Gastrocnemius medialis (tissue), 4 donors: ENCODE measurements at regions of chr1 and their contacts with region 1.

Region 1: DNA sequence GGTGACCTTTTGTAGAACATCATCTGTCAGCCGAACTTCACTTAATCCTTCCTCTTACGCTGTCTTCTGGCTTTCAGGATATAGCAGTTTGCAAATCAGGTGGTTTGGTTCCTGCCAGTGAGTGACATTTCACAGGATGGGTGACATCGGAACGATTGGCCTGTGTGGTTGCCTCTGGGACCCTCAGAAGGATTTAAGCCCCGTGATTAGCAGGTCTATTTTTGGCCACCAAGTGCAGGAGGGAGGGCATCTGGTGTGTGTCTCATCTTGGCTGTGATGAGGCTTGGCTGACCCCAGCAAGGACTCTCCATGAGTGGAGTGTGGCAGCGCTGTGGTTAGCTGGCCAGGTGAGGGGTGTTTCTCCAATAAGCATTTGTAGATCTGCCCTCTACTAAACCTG is 407.6 kb upstream of the VAMP3 start:
- DNase-seq: peak; percentile 43 to 44
- ATAC-seq: peak; percentile 50 to 56
- H3K4me3 ChIP-seq: no peak overlapping the region
- H3K27ac ChIP-seq: peak overlapping the region; percentile 46 to 80 (median 62)
- H3K4me1 ChIP-seq: peaks cover 22 to 31% of the 10 kb centered on the region in 2 donors
- H3K27me3 ChIP-seq: no peaks in the 10 kb centered on the region
- CTCF ChIP-seq: no peak
- POLR2A ChIP-seq: no peak

Region 2: GRCh38 chr1:7290971-7291970 is 72.2 kb before region 1 on chr1:
- in situ Hi-C with region 1: no loop called
- intact Hi-C with region 1: loop called (anchors 2 kb)
- DNase-seq: peak; percentile 77 to 81
- ATAC-seq: peak; percentile 95 to 96
- H3K4me3 ChIP-seq: no peak overlapping the region
- H3K27ac ChIP-seq: peak overlapping the region; percentile 38 to 64 (median 58)
- H3K4me1 ChIP-seq: peaks cover 15 to 16% of the 10 kb centered on the region in 2 donors
- H3K27me3 ChIP-seq: no peaks in the 10 kb centered on the region
- CTCF ChIP-seq: no peak
- POLR2A ChIP-seq: peak in 1 of 2 donors; percentile 9

Region 3: DNA sequence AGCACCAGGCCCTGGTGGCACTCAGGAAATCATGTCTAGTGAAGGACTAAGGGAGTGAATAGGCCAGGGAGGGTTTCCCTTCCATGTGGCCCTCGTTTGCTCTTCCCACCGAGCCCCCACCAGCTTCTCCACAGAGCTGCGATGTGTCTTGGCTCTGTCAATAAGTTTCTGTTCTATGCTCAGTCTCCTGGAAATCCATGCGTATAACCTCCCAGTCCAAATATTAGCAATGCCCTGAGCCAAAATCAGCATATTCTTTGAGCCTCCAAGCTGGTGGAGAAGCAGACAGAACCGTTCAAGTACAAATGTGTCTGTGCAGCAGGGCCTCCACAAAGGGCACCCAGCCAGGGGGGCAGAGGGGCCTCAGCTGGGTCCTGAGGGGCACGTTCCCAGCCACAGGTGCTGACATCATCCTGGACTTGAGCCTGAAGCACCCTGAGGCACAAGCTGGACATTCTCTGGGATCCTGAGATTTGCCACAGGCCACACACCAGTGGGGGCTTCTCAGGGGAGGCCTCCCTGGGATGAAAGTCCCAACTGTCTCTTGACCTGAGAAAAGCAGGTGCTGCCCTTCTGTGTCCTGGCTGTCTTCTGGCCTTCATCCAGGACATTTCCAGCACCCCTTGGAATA is 57.1 kb after region 1 on chr1:
- in situ Hi-C with region 1: no loop called
- intact Hi-C with region 1: no loop called
- DNase-seq: peak; percentile 0 to 1
- ATAC-seq: no peak
- H3K4me3 ChIP-seq: no peak overlapping the region
- H3K27ac ChIP-seq: no peak overlapping the region
- H3K4me1 ChIP-seq: no peaks in the 10 kb centered on the region
- H3K27me3 ChIP-seq: no peaks in the 10 kb centered on the region
- CTCF ChIP-seq: no peak
- POLR2A ChIP-seq: no peak

Region 4: GRCh38 chr1:7519861-7520395 is 156.5 kb after region 1 on chr1:
- in situ Hi-C with region 1: no loop called
- intact Hi-C with region 1: loop called (anchors 5 kb)
- DNase-seq: no peak
- ATAC-seq: no peak
- H3K4me3 ChIP-seq: no peak overlapping the region
- H3K27ac ChIP-seq: no peak overlapping the region
- H3K4me1 ChIP-seq: peaks cover 9 to 14% of the 10 kb centered on the region in 2 donors
- H3K27me3 ChIP-seq: no peaks in the 10 kb centered on the region
- CTCF ChIP-seq: no peak
- POLR2A ChIP-seq: no peak